Thyroid gland (tissue), 4 donors: ENCODE measurements at regions of chr5 and their contacts with region 1.

Region 1: GRCh38 chr5:154868702-154869101 is 10.3 kb downstream of the CNOT8 start:
- DNase-seq: peak; percentile 59 to 66
- H3K4me3 ChIP-seq: no peak overlapping the region
- H3K27ac ChIP-seq: peak overlapping the region; percentile 15 to 66 (median 46)
- H3K4me1 ChIP-seq: peaks cover 0 to 31% of the 10 kb centered on the region in 2 donors
- H3K27me3 ChIP-seq: no peaks in the 10 kb centered on the region
- CTCF ChIP-seq: peak in 4 of 6 experiments; percentile 15 to 41 (median 30)
- POLR2A ChIP-seq: no peak

Region 2: GRCh38 chr5:154677921-154678320 is 190.8 kb before region 1 on chr5:
- intact Hi-C with region 1: loop called (anchors 10 kb)
- DNase-seq: no peak
- H3K4me3 ChIP-seq: no peak overlapping the region
- H3K27ac ChIP-seq: no peak overlapping the region
- H3K4me1 ChIP-seq: peaks cover 0 to 4% of the 10 kb centered on the region in 2 donors
- H3K27me3 ChIP-seq: no peaks in the 10 kb centered on the region
- CTCF ChIP-seq: no peak
- POLR2A ChIP-seq: no peak